A549 (cell line): ENCODE measurements at regions of chr5 and their contacts with region 1.

Region 1: DNA sequence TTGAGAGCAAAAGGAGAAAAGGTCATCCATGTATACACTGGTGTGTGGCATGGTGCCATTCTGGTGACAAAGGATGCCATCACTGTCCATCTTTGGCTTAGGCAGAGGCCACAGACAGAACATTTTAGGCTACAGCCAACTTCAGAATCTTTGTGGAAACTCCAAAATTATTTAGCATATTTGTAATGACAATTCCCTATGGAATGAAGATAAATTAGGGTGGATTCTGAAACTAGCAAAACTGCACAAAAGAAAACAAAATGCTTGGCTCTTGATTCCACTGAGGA is 92.5 kb downstream of the FBXW11 start:
- DNase-seq: no peak
- ATAC-seq: no peak
- H3K4me3 ChIP-seq: no peak overlapping the region
- H3K27ac ChIP-seq: no peak overlapping the region
- H3K4me1 ChIP-seq: peaks cover 16% of the 10 kb centered on the region
- CTCF ChIP-seq: no peak
- EP300 ChIP-seq: no peak
- POLR2A ChIP-seq: no peak
- RAD21 ChIP-seq: no peak

Region 2: DNA sequence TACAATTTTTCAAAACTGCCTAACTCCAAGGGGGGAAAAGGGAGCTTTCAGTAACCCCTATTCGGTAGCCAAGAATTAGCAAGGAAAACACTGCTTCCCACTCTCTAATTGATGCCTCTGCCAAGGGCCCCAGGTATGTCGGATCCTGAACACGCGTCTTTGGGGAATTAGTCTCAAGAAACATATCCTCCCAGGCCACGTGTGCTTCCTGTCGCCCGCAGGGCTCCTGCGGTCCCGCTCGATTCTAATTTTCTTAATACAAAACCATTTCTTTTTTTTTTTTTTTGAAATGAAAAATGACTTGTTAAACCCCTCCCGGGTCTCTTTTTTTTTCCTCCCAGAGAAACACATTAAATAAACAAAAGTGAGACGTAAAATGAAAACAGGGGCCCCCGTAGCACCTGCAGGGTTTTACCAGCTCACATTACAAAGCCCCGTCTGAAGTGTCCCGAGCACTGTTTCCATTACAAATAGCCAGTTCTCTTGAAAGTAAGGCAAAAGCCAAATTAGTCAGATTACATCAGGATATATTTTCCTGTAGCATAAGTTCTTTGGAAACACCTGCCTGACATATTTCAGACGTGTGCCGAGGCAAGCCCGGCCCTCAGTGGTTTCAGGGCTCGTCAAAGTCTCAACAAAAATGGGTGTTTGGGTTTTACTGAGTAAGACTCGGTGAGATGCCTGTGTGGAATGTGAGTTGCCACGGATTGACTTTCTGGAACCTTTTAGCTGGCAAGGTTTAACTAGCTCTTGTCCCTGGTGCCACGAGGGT is 106.8 kb before region 1 on chr5:
- CTCF ChIA-PET with region 1: no interaction called
- POLR2A ChIA-PET with region 1: no interaction called
- DNase-seq: no peak
- ATAC-seq: no peak
- H3K4me3 ChIP-seq: no peak overlapping the region
- H3K27ac ChIP-seq: no peak overlapping the region
- H3K4me1 ChIP-seq: no peaks in the 10 kb centered on the region
- CTCF ChIP-seq: no peak
- EP300 ChIP-seq: no peak
- POLR2A ChIP-seq: no peak
- RAD21 ChIP-seq: no peak

Region 3: GRCh38 chr5:171874234-171874633 is 39.7 kb before region 1 on chr5:
- CTCF ChIA-PET with region 1: interaction called, 10 read pairs
- POLR2A ChIA-PET with region 1: no interaction called
- DNase-seq: no peak
- ATAC-seq: no peak
- H3K4me3 ChIP-seq: no peak overlapping the region
- H3K27ac ChIP-seq: no peak overlapping the region
- H3K4me1 ChIP-seq: no peaks in the 10 kb centered on the region
- CTCF ChIP-seq: no peak
- EP300 ChIP-seq: no peak
- POLR2A ChIP-seq: no peak
- RAD21 ChIP-seq: no peak

Region 4: GRCh38 chr5:171997024-171997423 is 83.1 kb after region 1 on chr5:
- CTCF ChIA-PET with region 1: interaction called, 10 read pairs
- POLR2A ChIA-PET with region 1: no interaction called
- DNase-seq: no peak
- ATAC-seq: no peak
- H3K4me3 ChIP-seq: no peak overlapping the region
- H3K27ac ChIP-seq: no peak overlapping the region
- H3K4me1 ChIP-seq: peaks cover 14% of the 10 kb centered on the region; the same call in 2 of the 3 replicates
- CTCF ChIP-seq: no peak
- EP300 ChIP-seq: no peak
- POLR2A ChIP-seq: no peak
- RAD21 ChIP-seq: no peak

Region 5: GRCh38 chr5:172044631-172045314 is 130.8 kb after region 1 on chr5:
- CTCF ChIA-PET with region 1: interaction called, 64 read pairs
- POLR2A ChIA-PET with region 1: no interaction called
- DNase-seq: no peak
- ATAC-seq: peak in 1 of 2 experiments; percentile 42; a peak in 3 of 6 replicates
- H3K4me3 ChIP-seq: no peak overlapping the region
- H3K27ac ChIP-seq: no peak overlapping the region
- H3K4me1 ChIP-seq: no peaks in the 10 kb centered on the region
- CTCF ChIP-seq: no peak
- EP300 ChIP-seq: no peak
- POLR2A ChIP-seq: no peak
- RAD21 ChIP-seq: 0 out of 5 replicates have a peak, but pooled peaks of 1 of the 2 experiments have one; percentile 15

Region 6: DNA sequence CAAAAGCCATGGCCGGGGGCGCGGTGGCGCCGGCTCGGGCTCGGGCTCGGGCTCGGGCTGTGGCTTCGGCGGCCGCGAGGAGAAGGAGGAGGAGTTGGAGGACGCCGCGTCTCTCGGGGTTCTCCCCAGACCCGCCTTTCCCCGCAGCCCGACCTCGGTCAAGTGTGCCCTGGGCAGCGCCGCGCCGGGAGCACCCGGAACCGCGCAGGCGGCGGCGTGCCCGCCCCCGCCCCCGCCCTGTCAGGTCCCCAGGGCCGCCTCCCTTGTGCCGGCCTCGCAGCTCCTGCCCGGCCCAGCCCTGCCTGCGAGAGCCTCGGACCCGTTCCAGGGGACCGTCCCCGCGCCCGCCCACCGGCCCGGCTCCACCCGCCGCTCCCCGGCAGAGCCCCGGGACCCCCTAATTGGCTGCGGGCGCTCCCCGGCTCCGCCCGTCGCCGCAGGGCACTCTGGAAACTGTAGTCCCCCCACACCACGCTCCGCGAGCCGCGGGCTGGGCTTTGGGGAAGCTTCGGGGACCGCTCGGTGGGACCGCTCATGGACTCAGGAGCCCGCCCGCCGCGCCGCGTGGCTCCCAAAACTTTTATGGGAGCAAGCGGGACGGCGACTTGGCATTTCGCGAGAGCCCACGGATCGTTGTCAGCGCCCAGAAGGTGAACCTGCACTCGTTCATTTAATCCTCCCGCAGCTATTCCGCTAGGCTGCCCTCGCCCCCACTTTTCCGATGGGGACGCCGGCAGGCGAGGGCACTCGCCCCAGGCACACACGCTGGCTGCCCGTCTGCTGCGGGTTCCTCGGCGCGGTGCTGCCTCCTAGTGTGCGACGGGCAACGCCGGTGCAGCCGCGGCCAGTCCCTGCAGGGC is 274.3 kb after region 1 on chr5 and contains the start of gene STK10:
- CTCF ChIA-PET with region 1: interaction called, 27 read pairs
- POLR2A ChIA-PET with region 1: no interaction called
- DNase-seq: peak; percentile 87 to 97
- ATAC-seq: peak; percentile 86 to 90
- H3K4me3 ChIP-seq: peak within 1 kb of the TSS; percentile 94
- H3K27ac ChIP-seq: peak within 1 kb of the TSS; percentile 77 to 88
- H3K4me1 ChIP-seq: peaks cover 8% of the 10 kb centered on the region
- CTCF ChIP-seq: peak; percentile 92
- EP300 ChIP-seq: no peak
- POLR2A ChIP-seq: peak; percentile 64
- RAD21 ChIP-seq: peak; percentile 85 to 93
- polyA plus RNA-seq, gene STK10: 4.3 and 5.3 TPM in 2 replicates